CD4-positive, alpha-beta memory T cell (primary cell): ENCODE measurements at regions of chr2 and their contacts with region 1.

Region 1: GRCh38 chr2:172465417-172466334 is 38.3 kb downstream of the ITGA6 start:
- DNase-seq: peak; percentile 75 to 80 (median 77)
- H3K4me3 ChIP-seq: peak overlapping the region in 1 of 2 donors; percentile 1
- H3K4me3 Mint-ChIP-seq: peak overlapping the region in 7 of 8 donors; percentile 36 to 94 (median 72)
- H3K27ac ChIP-seq: peak overlapping the region; percentile 50
- H3K27ac Mint-ChIP-seq: peak overlapping the region; percentile 63 to 97 (median 90)
- H3K4me1 ChIP-seq: peaks cover 54% of the 10 kb centered on the region
- H3K4me1 Mint-ChIP-seq: peaks cover 45 to 63% (median 52%) of the 10 kb centered on the region in 4 donors
- H3K27me3 ChIP-seq: no peaks in the 10 kb centered on the region
- H3K27me3 Mint-ChIP-seq: no peaks in the 10 kb centered on the region

Region 2: GRCh38 chr2:171811245-171811628 is 654.4 kb before region 1 on chr2:
- CTCF ChIA-PET with region 1: interaction called, 6 read pairs
- POLR2A ChIA-PET with region 1: no interaction called
- intact Hi-C with region 1: loop called (anchors 1 kb)
- DNase-seq: peak in 4 of 5 donors; percentile 3 to 14 (median 8)
- H3K4me3 ChIP-seq: no peak overlapping the region
- H3K4me3 Mint-ChIP-seq: no peak overlapping the region
- H3K27ac ChIP-seq: no peak overlapping the region
- H3K27ac Mint-ChIP-seq: no peak overlapping the region
- H3K4me1 ChIP-seq: no peaks in the 10 kb centered on the region
- H3K4me1 Mint-ChIP-seq: no peaks in the 10 kb centered on the region
- H3K27me3 ChIP-seq: no peaks in the 10 kb centered on the region
- H3K27me3 Mint-ChIP-seq: no peaks in the 10 kb centered on the region

Region 3: GRCh38 chr2:172172513-172173173 is 293.0 kb before region 1 on chr2:
- CTCF ChIA-PET with region 1: interaction called, 274 read pairs
- POLR2A ChIA-PET with region 1: interaction called, 25 read pairs
- intact Hi-C with region 1: loop called (anchors 1 kb)
- DNase-seq: peak in 4 of 5 donors; percentile 57 to 63 (median 60)
- H3K4me3 ChIP-seq: peak overlapping the region in 1 of 2 donors; percentile 40
- H3K4me3 Mint-ChIP-seq: peak overlapping the region; percentile 54 to 83 (median 72)
- H3K27ac ChIP-seq: no peak overlapping the region
- H3K27ac Mint-ChIP-seq: no peak overlapping the region
- H3K4me1 ChIP-seq: peaks cover 3% of the 10 kb centered on the region
- H3K4me1 Mint-ChIP-seq: peaks cover 3 to 6% (median 4%) of the 10 kb centered on the region in 4 donors
- H3K27me3 ChIP-seq: no peaks in the 10 kb centered on the region
- H3K27me3 Mint-ChIP-seq: peaks cover 0 to 4% of the 10 kb centered on the region in 2 donors

Region 4: GRCh38 chr2:172234716-172235691 is 230.7 kb before region 1 on chr2:
- CTCF ChIA-PET with region 1: interaction called, 40 read pairs
- POLR2A ChIA-PET with region 1: no interaction called
- intact Hi-C with region 1: loop called (anchors 2 kb)
- DNase-seq: peak; percentile 28 to 43 (median 39)
- H3K4me3 ChIP-seq: peak overlapping the region; percentile 42 to 73
- H3K4me3 Mint-ChIP-seq: peak overlapping the region; percentile 86 to 95 (median 89)
- H3K27ac ChIP-seq: no peak overlapping the region
- H3K27ac Mint-ChIP-seq: peak overlapping the region in 4 of 7 donors; percentile 35 to 49 (median 46)
- H3K4me1 ChIP-seq: peaks cover 15% of the 10 kb centered on the region
- H3K4me1 Mint-ChIP-seq: peaks cover 14 to 24% (median 20%) of the 10 kb centered on the region in 4 donors
- H3K27me3 ChIP-seq: peaks cover 20% of the 10 kb centered on the region
- H3K27me3 Mint-ChIP-seq: peaks cover 27 to 36% of the 10 kb centered on the region in 2 donors

Region 5: GRCh38 chr2:172427256-172427989 is 38.3 kb before region 1 on chr2 and contains the start of gene ITGA6:
- CTCF ChIA-PET with region 1: interaction called, 1,033 read pairs
- POLR2A ChIA-PET with region 1: interaction called, 449 read pairs
- intact Hi-C with region 1: loop called (anchors 1 kb)
- DNase-seq: peak; percentile 75 to 84 (median 78)
- H3K4me3 ChIP-seq: peak within 1 kb of the TSS; percentile 31 to 76
- H3K4me3 Mint-ChIP-seq: peak within 1 kb of the TSS; percentile 88 to 97 (median 94)
- H3K27ac ChIP-seq: peak within 1 kb of the TSS; percentile 66
- H3K27ac Mint-ChIP-seq: peak within 1 kb of the TSS; percentile 92 to 95 (median 93)
- H3K4me1 ChIP-seq: peaks cover 65% of the 10 kb centered on the region
- H3K4me1 Mint-ChIP-seq: peaks cover 30 to 52% (median 46%) of the 10 kb centered on the region in 4 donors
- H3K27me3 ChIP-seq: no peaks in the 10 kb centered on the region
- H3K27me3 Mint-ChIP-seq: no peaks in the 10 kb centered on the region
- total RNA-seq, gene ITGA6: 69.1 to 73.6 TPM

Region 6: GRCh38 chr2:172710584-172711024 is 244.9 kb after region 1 on chr2:
- CTCF ChIA-PET with region 1: no interaction called
- POLR2A ChIA-PET with region 1: no interaction called
- intact Hi-C with region 1: loop called (anchors 5 kb)
- DNase-seq: peak in 4 of 5 donors; percentile 11 to 31 (median 22)
- H3K4me3 ChIP-seq: no peak overlapping the region
- H3K4me3 Mint-ChIP-seq: no peak overlapping the region
- H3K27ac ChIP-seq: no peak overlapping the region
- H3K27ac Mint-ChIP-seq: no peak overlapping the region
- H3K4me1 ChIP-seq: no peaks in the 10 kb centered on the region
- H3K4me1 Mint-ChIP-seq: no peaks in the 10 kb centered on the region
- H3K27me3 ChIP-seq: no peaks in the 10 kb centered on the region
- H3K27me3 Mint-ChIP-seq: peaks cover 11 to 19% of the 10 kb centered on the region in 2 donors